ENCODE measurements at regions of chr5 and their contacts with region 1.

Region 1: DNA sequence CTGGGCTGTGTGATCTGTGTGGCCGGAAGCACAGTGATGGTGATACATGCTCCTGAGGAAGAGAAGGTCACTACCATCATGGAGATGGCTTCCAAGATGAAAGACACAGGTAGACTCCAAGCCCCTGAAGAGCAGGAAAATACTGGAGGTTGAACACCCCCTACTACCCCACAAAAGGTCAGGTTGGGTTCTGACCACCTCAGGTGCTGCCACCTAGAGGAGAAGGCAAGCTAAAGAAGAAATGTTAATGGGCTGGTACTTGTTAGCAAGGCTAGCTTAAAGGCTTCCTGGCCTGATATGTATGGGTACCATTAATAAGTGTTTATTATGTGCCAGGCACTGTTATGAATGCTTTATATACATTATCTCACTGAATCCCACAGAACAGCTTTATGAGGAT is 11.7 kb downstream of the NIPAL4 start:
- DNase-seq: no peak
- ATAC-seq: peak; percentile 81
- H3K4me3 ChIP-seq: no peak overlapping the region
- H3K27ac ChIP-seq: no peak overlapping the region
- H3K4me1 ChIP-seq: no peaks in the 10 kb centered on the region
- H3K27me3 ChIP-seq: no peaks in the 10 kb centered on the region
- CTCF ChIP-seq: peak; percentile 48 to 66 (median 62); a peak in 5 of 6 replicates
- EP300 ChIP-seq: no peak
- POLR2A ChIP-seq: no peak
- RAD21 ChIP-seq: peak; percentile 68

Region 2: DNA sequence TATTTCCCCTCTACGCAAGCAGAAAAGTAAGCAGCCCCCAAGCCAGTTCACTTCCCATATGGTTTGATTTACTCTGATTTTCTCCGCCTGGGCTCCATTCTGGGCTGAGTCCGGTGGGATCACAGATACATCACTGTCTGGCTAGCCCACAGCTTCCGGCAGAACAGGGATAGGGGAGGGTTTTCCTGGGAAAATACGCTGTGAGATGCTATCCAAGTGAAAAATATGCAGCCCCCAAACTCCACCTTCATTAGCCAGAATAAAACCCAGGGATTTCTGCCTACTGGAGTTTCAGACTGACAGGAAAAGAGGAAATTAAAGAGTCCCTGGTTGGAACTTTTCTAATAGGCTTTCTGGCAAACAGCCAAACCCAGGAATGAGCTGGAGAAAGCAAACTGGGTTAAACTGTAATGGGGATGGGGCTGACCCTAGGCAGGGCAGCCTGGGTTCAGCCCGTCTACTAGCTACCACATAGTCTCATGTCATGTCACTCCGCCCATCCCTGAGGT is 28.6 kb before region 1 on chr5:
- CTCF ChIA-PET with region 1: interaction called, 27 read pairs
- POLR2A ChIA-PET with region 1: no interaction called
- RAD21 ChIA-PET with region 1: interaction called, 6 read pairs
- SMC1A ChIA-PET with region 1: interaction called, 7 read pairs
- in situ Hi-C with region 1: no loop called
- intact Hi-C with region 1: no loop called
- DNase-seq: no peak
- ATAC-seq: no peak
- H3K4me3 ChIP-seq: no peak overlapping the region
- H3K27ac ChIP-seq: no peak overlapping the region
- H3K4me1 ChIP-seq: no peaks in the 10 kb centered on the region
- H3K27me3 ChIP-seq: no peaks in the 10 kb centered on the region
- CTCF ChIP-seq: no peak
- EP300 ChIP-seq: no peak
- POLR2A ChIP-seq: no peak
- RAD21 ChIP-seq: no peak

Region 3: DNA sequence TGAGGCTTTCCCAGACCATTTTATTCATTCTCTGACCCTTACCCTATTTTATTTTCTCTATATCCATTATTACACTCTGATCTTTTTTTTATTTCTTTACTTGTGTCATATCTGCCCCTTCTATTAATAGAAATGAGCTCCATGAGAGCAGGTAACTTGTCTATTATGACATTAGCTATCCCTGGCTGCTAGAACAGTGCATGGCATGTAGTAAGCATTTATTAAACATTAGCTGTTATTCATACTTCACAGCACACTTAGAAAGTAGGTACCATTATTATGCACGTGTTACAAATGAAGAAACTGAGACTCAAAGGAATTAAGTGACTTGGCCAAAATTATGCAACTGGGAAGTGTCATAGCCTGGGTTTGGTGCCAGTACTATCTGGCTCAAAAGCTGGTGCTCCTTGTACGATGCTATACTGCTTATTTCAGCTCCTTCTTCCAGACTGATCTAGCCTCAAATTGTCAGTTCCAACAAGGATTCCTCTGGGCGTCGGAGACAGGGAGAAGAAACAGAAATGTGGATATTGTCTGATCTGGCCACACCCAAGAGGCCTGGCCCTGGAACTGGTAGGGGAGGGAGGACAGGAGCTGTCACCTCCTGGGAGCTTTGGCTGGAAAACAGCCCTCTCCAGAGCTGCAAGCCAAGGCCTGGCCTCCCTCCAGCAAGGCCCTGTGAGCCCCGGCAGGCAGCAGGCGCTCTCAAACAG is 22.5 kb before region 1 on chr5:
- CTCF ChIA-PET with region 1: interaction called, 27 read pairs
- POLR2A ChIA-PET with region 1: interaction called, 3 read pairs
- RAD21 ChIA-PET with region 1: interaction called, 6 read pairs
- SMC1A ChIA-PET with region 1: interaction called, 7 read pairs
- in situ Hi-C with region 1: no loop called
- intact Hi-C with region 1: no loop called
- DNase-seq: no peak
- ATAC-seq: no peak; the same call in 2 of the 3 replicates
- H3K4me3 ChIP-seq: no peak overlapping the region
- H3K27ac ChIP-seq: no peak overlapping the region
- H3K4me1 ChIP-seq: no peaks in the 10 kb centered on the region
- H3K27me3 ChIP-seq: no peaks in the 10 kb centered on the region
- CTCF ChIP-seq: no peak
- EP300 ChIP-seq: no peak
- POLR2A ChIP-seq: no peak
- RAD21 ChIP-seq: no peak

Region 4: DNA sequence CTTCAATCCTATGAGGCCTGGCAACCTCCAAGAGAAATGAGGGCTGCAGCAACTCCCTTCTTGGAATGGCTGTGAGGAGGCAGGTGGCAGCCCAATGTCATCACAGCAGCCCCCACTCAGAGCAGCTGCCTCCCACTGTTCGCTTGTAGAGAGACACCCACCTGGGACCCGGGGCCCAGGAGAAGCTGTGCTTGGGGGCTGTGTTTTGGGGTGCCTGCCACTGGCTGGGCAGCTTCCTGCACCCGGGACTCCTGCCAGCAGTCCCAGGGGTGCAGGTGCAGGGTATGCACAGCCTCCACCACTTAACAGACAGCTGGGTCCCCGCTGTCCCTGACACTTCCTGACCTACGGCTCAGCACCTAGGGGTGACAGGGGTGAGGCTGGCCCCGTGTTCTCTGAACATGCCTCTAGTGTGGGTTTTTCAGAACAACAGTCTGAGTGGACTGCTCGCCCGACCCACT is 14.5 kb after region 1 on chr5:
- CTCF ChIA-PET with region 1: interaction called, 17 read pairs
- POLR2A ChIA-PET with region 1: no interaction called
- RAD21 ChIA-PET with region 1: interaction called, 3 read pairs
- SMC1A ChIA-PET with region 1: interaction called, 4 read pairs
- in situ Hi-C with region 1: no loop called
- intact Hi-C with region 1: no loop called
- DNase-seq: no peak
- ATAC-seq: peak; percentile 43
- H3K4me3 ChIP-seq: no peak overlapping the region
- H3K27ac ChIP-seq: peak overlapping the region; percentile 24
- H3K4me1 ChIP-seq: peaks cover 29% of the 10 kb centered on the region
- H3K27me3 ChIP-seq: no peaks in the 10 kb centered on the region
- CTCF ChIP-seq: no peak
- EP300 ChIP-seq: no peak
- POLR2A ChIP-seq: no peak
- RAD21 ChIP-seq: no peak

Measured in GM12878 (cell line).